ENCODE measurements at regions of chr19 and their contacts with region 1.

Region 1: GRCh38 chr19:9584073-9584833 is at the start of gene ZNF121:
- DNase-seq: no peak
- H3K4me3 ChIP-seq: peak within 1 kb of the TSS; percentile 94
- CTCF ChIP-seq: no peak

Region 2: DNA sequence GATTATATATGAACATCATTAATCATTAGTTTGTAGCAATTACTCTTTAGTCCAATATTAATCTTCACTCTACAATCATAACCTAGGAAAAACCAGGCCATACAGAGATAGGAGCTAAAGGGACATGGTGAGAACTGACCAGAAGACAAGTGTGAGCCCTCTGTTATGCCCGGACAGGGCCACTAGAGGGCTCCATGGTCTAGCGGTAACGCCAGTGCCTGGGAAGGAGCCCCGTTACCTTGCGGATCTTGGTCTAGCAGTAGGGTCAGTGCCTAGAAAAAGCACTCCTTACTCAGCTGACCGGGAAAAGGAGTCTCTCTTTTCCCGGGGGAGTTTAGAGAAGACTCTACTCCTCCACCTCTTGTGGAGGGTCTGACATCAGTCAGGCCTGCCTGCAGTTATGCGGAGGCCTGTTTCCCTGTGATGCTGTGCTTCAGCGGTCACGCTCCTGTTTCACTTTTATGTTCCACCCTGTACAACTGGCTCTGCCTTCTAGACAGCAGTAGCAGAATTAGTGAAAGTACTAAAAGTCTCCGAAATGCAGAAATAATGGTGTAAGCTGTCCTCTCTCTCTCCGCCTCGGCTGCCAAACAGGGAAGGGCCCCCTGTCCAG is 378.6 kb before region 1 on chr19:
- CTCF ChIA-PET with region 1: interaction called, 10 read pairs
- POLR2A ChIA-PET with region 1: no interaction called
- DNase-seq: no peak
- H3K4me3 ChIP-seq: peak overlapping the region; percentile 40
- CTCF ChIP-seq: peak; percentile 83

Region 3: DNA sequence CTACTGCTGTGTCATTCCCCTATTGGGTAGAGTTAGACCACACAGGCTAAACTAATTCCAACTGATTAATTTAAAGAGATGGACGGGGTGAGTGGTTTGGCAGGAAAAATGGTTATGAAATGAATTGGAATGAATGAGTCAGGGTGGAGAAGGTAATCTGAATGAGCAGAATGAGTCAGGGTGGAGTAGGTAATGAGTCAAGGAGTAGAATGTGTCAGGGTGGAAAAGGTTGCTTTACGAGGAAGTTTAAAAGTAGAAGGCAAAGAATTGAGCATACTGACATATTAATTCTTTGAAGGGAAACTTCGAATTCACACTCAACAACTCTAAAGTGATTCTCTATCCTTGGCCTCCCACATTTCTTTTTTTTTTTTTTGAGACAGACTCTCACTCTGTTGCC is 12.8 kb after region 1 on chr19:
- CTCF ChIA-PET with region 1: interaction called, 13 read pairs
- POLR2A ChIA-PET with region 1: no interaction called
- DNase-seq: peak; percentile 33
- H3K4me3 ChIP-seq: no peak overlapping the region
- CTCF ChIP-seq: no peak

Region 4: DNA sequence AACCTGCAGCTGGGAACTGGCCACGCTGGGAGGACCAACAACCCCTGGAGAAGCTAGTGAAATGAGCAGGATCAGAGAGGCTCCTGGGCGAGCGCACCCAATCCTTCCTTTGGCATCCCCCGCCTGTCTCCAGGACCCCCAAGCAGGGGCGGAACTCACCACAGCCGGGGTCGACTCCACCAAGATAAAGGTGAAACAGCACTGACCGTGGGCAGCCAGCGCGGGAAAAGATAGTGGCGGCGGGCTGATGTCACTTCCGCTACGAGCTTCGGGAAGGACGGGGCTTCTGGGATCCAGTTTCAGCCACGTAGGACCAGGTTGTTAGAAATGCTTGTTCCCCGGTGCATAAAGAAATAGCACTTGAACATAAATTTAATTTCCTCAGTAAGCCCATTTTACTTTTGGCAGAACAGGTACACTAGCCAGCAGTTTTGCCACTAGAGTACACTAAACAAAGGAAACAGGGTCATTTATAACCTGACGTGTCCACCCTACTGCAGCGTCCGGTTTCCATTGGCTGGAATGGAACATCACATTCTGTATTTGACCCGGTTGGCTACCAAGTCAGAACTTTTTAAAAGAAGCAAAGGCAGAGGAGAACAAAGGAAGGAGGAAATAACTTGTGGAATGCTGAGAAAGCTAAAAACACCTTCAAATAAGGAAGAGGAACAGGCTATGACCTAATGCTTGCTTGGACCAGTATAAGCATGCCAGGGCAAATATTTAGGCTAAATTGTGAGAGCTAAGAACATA is 116.2 kb after region 1 on chr19:
- CTCF ChIA-PET with region 1: no interaction called
- POLR2A ChIA-PET with region 1: no interaction called
- DNase-seq: no peak
- H3K4me3 ChIP-seq: no peak overlapping the region
- CTCF ChIP-seq: no peak

Region 5: DNA sequence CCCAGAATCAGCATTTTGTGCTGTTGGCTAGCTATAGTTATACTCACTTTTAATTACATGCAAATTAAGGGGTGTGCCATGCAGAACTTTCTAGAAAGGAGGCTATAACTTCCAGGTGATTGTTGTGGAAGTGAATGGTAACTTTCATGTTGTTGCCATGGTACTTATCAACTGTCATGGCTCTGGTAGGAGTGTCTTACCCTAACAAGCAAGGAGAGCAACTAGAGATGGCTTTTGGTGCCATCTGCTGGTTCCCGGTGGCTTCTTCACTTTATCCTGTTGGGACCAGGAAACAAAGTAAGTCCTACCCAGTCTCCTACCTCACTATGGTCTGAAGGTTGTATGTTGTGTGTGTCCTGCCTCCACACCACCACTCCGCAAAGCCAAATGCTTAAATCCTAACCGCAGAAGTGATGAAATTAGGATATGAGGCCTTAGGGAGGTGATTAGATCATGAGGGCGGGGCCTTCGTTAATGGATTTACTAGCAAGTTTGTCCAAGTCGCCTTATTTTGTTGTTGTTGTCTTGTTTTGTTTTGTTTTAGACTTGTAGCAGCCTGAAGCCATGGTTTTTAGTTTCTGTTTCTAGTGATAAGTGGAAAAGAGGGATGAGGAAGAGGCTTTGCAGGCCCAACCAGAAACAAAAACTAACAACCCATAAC is 212.0 kb after region 1 on chr19:
- CTCF ChIA-PET with region 1: interaction called, 39 read pairs
- POLR2A ChIA-PET with region 1: interaction called, 4 read pairs
- DNase-seq: peak; percentile 64
- H3K4me3 ChIP-seq: no peak overlapping the region
- CTCF ChIP-seq: peak; percentile 74

Measured in AG04449 (cell line).